PC-3 (cell line): ENCODE measurements at regions of chr2 and their contacts with region 1.

Region 1: GRCh38 chr2:173204316-173204715 is 128.7 kb downstream of the MAP3K20 start:
- DNase-seq: no peak
- ATAC-seq: no peak
- H3K4me3 ChIP-seq: no peak overlapping the region
- H3K27ac ChIP-seq: no peak overlapping the region
- H3K4me1 ChIP-seq: peaks cover 10% of the 10 kb centered on the region
- H3K27me3 ChIP-seq: no peaks in the 10 kb centered on the region
- CTCF ChIP-seq: no peak

Region 2: DNA sequence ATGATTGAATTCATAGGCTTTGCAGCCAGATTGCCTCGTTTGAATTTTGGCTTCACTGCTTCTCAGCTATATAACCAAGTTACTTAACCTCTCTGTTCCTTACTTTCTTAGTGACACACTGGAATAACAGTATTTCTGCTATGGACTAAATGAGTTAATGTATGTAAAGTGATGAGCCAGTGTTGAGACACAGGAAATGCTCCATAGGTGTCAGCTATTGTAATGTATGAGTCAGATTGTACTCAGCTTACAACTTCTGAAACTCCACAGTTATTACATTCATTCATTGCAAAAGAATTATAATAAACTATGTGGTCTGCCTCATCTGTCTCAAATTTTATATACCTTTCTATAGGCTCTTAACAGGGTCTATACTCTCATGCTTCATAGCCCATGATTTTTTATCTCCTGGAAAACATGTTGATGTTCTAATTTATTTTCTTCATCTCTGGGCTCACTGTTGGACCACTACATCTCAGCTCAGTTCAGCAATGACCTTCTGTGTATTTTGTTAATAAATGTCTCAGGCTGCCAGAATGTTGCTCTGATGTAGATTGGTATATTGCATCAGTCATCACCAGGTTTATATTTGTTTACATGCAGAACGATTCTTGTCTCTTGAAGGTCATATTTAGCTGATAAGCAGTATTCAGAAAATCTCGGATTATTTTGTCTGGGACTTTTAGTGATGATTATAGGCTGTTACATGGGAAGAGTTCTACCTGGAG is 52.5 kb before region 1 on chr2:
- CTCF ChIA-PET with region 1: no interaction called
- POLR2A ChIA-PET with region 1: no interaction called
- intact Hi-C with region 1: loop called (anchors 5 kb)
- DNase-seq: peak; percentile 94
- ATAC-seq: peak; percentile 85
- H3K4me3 ChIP-seq: peak overlapping the region; percentile 23; the same call in 1 of the 2 replicates
- H3K27ac ChIP-seq: peak overlapping the region; percentile 86
- H3K4me1 ChIP-seq: peaks cover 58% of the 10 kb centered on the region
- H3K27me3 ChIP-seq: no peaks in the 10 kb centered on the region
- CTCF ChIP-seq: no peak

Region 3: GRCh38 chr2:173537694-173538093 is 333.4 kb after region 1 on chr2:
- CTCF ChIA-PET with region 1: no interaction called
- POLR2A ChIA-PET with region 1: no interaction called
- intact Hi-C with region 1: no loop called
- DNase-seq: no peak
- ATAC-seq: no peak
- H3K4me3 ChIP-seq: no peak overlapping the region
- H3K27ac ChIP-seq: no peak overlapping the region
- H3K4me1 ChIP-seq: no peaks in the 10 kb centered on the region; the same call in 1 of the 2 replicates
- H3K27me3 ChIP-seq: no peaks in the 10 kb centered on the region
- CTCF ChIP-seq: no peak